AG04449 (cell line): ENCODE measurements at regions of chr6 and their contacts with region 1.

Region 1: GRCh38 chr6:37566111-37566949 is 66.6 kb upstream of the CCDC167 start:
- DNase-seq: no peak
- H3K4me3 ChIP-seq: peak overlapping the region; percentile 54
- CTCF ChIP-seq: peak; percentile 98

Region 2: GRCh38 chr6:37324131-37325033 is 241.9 kb before region 1 on chr6:
- CTCF ChIA-PET with region 1: interaction called, 21 read pairs
- POLR2A ChIA-PET with region 1: no interaction called
- DNase-seq: no peak
- H3K4me3 ChIP-seq: no peak overlapping the region
- CTCF ChIP-seq: no peak

Region 3: DNA sequence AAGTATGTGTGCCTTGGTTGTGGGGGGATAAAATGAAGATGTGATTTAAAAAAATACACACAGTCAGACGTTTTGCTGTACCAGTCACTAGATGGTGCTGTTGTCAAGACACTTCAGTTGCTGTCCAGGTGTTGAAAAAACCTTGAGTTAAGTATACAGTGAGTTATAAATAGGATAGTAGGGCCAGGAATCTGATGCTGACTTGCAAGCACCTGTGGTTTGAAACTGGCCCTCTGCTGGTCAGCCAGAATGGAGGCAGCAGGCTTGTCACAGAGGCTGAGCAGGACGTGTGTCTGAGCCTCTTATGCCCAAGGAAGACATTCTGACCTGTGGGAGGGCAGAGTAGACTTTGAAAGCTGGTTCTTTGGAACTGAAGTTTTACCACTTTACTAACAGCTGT is 184.8 kb before region 1 on chr6:
- CTCF ChIA-PET with region 1: interaction called, 12 read pairs
- POLR2A ChIA-PET with region 1: no interaction called
- DNase-seq: no peak
- H3K4me3 ChIP-seq: no peak overlapping the region
- CTCF ChIP-seq: peak; percentile 24

Region 4: GRCh38 chr6:37538107-37538506 is 28.2 kb before region 1 on chr6:
- CTCF ChIA-PET with region 1: interaction called, 10 read pairs
- POLR2A ChIA-PET with region 1: no interaction called
- DNase-seq: no peak
- H3K4me3 ChIP-seq: no peak overlapping the region
- CTCF ChIP-seq: peak; percentile 44

Region 5: GRCh38 chr6:37554480-37554819 is 11.9 kb before region 1 on chr6:
- CTCF ChIA-PET with region 1: interaction called, 67 read pairs
- POLR2A ChIA-PET with region 1: no interaction called
- DNase-seq: peak; percentile 21
- H3K4me3 ChIP-seq: no peak overlapping the region; the same call in 1 of the 2 replicates
- CTCF ChIP-seq: no peak

Region 6: DNA sequence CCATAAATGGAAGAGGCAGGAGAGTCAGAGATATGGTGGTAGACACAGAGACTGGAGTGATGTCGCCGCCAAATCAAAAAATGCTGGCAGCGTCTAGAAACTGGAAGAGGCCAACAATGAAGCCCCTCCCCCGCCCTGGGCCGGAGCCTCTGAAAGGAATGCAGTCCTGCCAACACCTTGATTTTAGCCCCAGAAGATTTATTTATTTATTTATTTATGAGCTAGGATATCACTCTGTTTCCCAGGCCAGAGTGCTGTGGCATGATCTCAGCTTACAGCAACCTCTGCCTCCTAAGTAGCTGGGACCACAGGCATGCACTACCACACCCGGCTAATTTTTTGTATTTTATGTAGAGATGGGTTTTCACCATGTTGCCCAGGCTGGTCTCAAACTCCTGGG is 16.0 kb after region 1 on chr6:
- CTCF ChIA-PET with region 1: interaction called, 40 read pairs
- POLR2A ChIA-PET with region 1: no interaction called
- DNase-seq: peak; percentile 28
- H3K4me3 ChIP-seq: no peak overlapping the region
- CTCF ChIP-seq: no peak